K562 (cell line): ENCODE measurements at regions of chr16 and their contacts with region 1.

Region 1: GRCh38 chr16:4814542-4815173 is 12.2 kb upstream of the ROGDI start:
- DNase-seq: peak in 2 of 4 experiments; percentile 18 to 24
- ATAC-seq: peak; percentile 73
- H3K4me3 ChIP-seq: no peak overlapping the region
- H3K27ac ChIP-seq: no peak overlapping the region
- H3K4me1 ChIP-seq: peaks cover 0 to 3% of the 10 kb centered on the region in 2 experiments; a peak in 2 of 5 replicates
- H3K27me3 ChIP-seq: no peaks in the 10 kb centered on the region
- CTCF ChIP-seq: peak in 2 of 3 experiments; percentile 5 to 32; a peak in 2 of 6 replicates
- EP300 ChIP-seq: no peak
- POLR2A ChIP-seq: no peak
- RAD21 ChIP-seq: peak in 1 of 2 experiments; percentile 24; a peak in 2 of 4 replicates

Region 2: DNA sequence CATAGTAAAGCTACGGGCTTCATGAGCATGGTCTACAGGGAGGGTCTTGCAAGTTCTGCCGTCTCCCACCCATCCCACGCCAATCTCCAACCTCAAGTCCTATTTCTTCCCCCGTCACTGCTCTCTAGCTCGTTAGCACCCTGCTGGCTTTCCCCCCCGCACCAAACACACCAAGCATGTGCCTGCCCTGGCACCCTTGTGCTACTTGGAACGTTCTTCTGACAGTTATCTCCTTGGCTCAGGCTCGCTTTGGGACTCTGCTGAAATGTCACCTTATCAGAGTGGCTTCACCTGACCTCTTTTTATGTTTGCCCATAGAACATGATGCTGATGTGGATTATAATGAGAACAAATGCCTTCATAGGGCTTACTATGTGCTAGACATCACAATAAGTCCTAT is 10.5 kb after region 1 on chr16:
- CTCF ChIA-PET with region 1: no interaction called
- POLR2A ChIA-PET with region 1: interaction called, 3 read pairs
- in situ Hi-C with region 1: no loop called
- intact Hi-C with region 1: loop called (anchors 1 kb)
- DNase-seq: no peak
- ATAC-seq: no peak
- H3K4me3 ChIP-seq: no peak overlapping the region
- H3K27ac ChIP-seq: no peak overlapping the region
- H3K4me1 ChIP-seq: no peaks in the 10 kb centered on the region
- H3K27me3 ChIP-seq: no peaks in the 10 kb centered on the region
- CTCF ChIP-seq: no peak
- EP300 ChIP-seq: no peak
- POLR2A ChIP-seq: no peak
- RAD21 ChIP-seq: no peak